Activated CD4-positive, alpha-beta memory T cell treated with anti-CD3 and anti-CD28 coated beads for 36 hours (primary cell): ENCODE measurements at regions of chr15 and their contacts with region 1.

Region 1: DNA sequence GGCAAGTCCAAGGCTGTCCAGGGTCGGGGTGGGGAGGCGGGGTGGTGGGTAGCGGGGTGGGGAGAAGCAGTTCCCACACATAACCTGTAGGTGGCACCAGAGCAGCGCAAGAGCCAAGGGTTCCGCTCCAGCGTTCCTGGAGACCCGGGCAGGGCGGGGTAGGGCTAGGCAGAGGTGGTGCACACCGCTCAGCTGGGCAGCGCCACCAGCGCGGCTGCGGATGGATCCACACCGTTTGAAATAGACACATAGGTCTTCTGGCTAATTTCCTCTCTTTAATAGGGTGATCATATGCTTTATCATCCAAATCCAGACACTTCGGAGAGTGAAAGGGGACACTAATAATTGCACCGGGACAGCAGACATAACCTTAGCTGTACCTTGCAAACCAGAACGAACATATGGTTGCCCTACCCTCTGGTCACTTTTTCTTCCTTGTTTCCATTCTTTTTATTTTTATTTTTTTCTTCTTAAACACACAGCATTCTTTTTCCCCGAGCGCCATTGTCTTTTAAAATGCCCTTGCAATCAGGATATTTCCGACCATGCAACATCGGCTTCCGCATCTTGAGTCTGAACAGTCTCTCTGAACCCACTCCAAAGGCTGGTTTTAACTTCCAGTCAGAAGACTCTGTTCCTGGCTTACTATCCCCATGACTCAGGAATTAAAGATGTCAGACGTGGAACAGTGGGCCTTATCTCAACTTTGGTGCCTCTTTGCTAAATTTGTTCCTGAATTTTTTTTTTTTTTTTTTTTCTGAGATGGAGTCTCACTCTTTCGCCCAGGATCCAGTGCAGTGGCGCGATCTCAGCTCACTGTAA is 12.5 kb upstream of the ZSCAN2 start:
- DNase-seq: peak; percentile 91
- H3K4me3 Mint-ChIP-seq: peak overlapping the region; percentile 59
- H3K27ac Mint-ChIP-seq: no peak overlapping the region
- H3K4me1 Mint-ChIP-seq: peaks cover 2% of the 10 kb centered on the region
- H3K27me3 Mint-ChIP-seq: no peaks in the 10 kb centered on the region

Region 2: DNA sequence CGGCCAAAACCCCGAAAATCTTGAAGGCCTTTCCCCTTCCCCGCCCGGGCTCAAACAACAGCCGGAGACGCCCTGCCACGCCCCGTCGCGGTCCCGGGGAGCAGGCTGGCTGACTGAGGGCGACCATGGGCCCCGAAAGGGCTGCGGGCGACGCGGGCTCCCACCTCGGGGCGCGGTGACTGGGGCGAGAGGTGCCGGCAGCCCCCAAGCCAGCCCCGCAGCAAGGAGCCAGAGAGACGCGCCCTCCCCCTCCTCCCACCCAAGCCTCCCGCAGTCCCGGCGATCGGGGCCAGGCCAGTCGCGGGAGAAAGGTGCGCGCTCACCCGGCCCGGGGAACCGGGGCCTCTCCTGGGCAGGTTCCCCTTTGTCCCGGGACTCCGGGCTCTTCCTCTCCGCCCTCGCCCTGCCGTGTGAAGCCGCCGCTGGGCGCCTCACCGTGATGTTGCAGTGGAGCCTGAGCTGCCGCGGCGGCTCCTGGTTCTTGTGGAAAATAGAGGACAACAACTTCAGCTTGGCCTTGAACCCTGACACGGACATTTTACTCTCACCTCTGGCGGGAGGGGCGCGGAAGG is 18.0 kb before region 1 on chr15:
- CTCF ChIA-PET with region 1: interaction called, 65 read pairs
- POLR2A ChIA-PET with region 1: no interaction called
- intact Hi-C with region 1: no loop called
- DNase-seq: peak; percentile 67
- H3K4me3 Mint-ChIP-seq: peak overlapping the region; percentile 84
- H3K27ac Mint-ChIP-seq: peak overlapping the region; percentile 60
- H3K4me1 Mint-ChIP-seq: peaks cover 14% of the 10 kb centered on the region
- H3K27me3 Mint-ChIP-seq: no peaks in the 10 kb centered on the region

Region 3: DNA sequence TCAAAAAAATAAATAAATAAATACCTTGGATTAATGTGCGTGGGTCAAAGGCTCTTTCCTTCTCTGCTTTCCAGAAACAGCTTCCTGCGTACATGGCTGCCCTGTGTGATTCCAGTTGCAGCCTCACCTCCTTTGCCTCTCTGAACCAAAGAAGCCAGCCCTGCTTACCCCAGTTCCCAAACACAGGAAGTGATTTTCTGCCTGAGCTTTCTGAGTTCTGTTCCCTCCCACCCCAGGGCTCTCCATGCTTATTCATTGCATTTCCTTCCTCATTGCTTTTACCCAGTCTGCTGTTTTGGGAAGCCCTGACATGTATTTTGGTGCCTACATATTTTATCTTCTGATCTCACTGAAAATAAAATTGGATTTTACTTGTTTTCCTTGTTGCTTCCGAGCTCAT is 28.0 kb after region 1 on chr15:
- CTCF ChIA-PET with region 1: no interaction called
- POLR2A ChIA-PET with region 1: no interaction called
- intact Hi-C with region 1: no loop called
- DNase-seq: no peak
- H3K4me3 Mint-ChIP-seq: no peak overlapping the region
- H3K27ac Mint-ChIP-seq: no peak overlapping the region
- H3K4me1 Mint-ChIP-seq: no peaks in the 10 kb centered on the region
- H3K27me3 Mint-ChIP-seq: no peaks in the 10 kb centered on the region

Region 4: GRCh38 chr15:84633311-84634227 is 45.3 kb after region 1 on chr15:
- CTCF ChIA-PET with region 1: interaction called, 11 read pairs
- POLR2A ChIA-PET with region 1: no interaction called
- intact Hi-C with region 1: loop called (anchors 1 kb)
- DNase-seq: peak; percentile 73
- H3K4me3 Mint-ChIP-seq: peak overlapping the region; percentile 98
- H3K27ac Mint-ChIP-seq: peak overlapping the region; percentile 96
- H3K4me1 Mint-ChIP-seq: peaks cover 47% of the 10 kb centered on the region
- H3K27me3 Mint-ChIP-seq: no peaks in the 10 kb centered on the region

Region 5: DNA sequence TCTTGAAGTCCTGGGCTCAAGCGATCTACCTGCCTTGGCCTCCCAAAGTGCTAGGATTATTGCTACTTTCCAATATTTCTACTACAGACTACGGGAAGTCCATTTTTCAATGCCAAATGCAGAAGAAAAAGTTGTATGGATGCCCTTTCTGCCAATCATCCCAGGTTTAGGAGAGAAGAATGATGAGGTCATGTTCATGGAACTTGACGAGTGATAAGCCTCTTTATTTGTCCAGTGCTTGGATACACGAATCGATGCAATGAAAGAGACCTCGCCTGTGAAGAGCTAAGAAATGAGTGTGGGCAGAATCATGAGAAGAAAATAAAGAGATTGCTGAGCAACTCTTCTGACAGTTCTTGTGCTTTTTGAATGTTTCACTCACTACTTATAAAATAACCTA is 295.2 kb after region 1 on chr15:
- CTCF ChIA-PET with region 1: interaction called, 26 read pairs
- POLR2A ChIA-PET with region 1: no interaction called
- intact Hi-C with region 1: loop called (anchors 1 kb)
- DNase-seq: no peak
- H3K4me3 Mint-ChIP-seq: no peak overlapping the region
- H3K27ac Mint-ChIP-seq: no peak overlapping the region
- H3K4me1 Mint-ChIP-seq: no peaks in the 10 kb centered on the region
- H3K27me3 Mint-ChIP-seq: no peaks in the 10 kb centered on the region

Region 6: DNA sequence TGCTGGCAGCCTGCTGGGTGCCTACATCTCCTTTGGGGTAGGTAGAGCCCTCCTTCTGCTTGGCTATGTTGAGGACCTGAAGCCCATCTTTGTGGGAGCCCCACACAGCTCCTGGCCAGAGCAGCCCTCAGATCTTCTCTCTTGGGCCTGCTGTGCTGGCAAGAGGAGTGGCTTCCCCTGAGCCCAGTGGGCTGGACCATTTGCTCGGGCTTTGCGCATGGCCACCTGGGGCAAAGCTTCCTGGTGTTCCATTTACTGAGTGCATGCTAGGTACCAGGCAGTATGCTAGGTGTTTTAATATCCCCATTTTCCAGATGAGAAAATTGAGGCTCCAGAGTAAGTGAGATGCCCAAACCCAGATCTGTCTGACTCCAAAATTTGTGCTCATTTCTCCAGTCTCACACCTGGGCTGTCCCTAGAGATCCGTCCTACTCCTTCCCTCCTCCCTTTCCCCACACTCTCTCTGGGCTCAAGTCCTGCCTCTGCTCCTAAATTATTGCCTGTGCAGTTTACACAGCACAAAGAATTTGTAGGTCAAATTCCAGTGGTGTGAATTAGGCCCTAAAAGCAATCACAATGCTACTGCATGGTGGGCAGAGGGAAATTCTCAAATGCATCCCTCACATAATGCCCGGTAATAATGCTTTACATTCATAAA is 335.9 kb after region 1 on chr15:
- CTCF ChIA-PET with region 1: interaction called, 34 read pairs
- POLR2A ChIA-PET with region 1: interaction called, 5 read pairs
- intact Hi-C with region 1: loop called (anchors 1 kb)
- DNase-seq: no peak
- H3K4me3 Mint-ChIP-seq: no peak overlapping the region
- H3K27ac Mint-ChIP-seq: no peak overlapping the region
- H3K4me1 Mint-ChIP-seq: peaks cover 5% of the 10 kb centered on the region
- H3K27me3 Mint-ChIP-seq: peaks cover 2% of the 10 kb centered on the region

Region 7: DNA sequence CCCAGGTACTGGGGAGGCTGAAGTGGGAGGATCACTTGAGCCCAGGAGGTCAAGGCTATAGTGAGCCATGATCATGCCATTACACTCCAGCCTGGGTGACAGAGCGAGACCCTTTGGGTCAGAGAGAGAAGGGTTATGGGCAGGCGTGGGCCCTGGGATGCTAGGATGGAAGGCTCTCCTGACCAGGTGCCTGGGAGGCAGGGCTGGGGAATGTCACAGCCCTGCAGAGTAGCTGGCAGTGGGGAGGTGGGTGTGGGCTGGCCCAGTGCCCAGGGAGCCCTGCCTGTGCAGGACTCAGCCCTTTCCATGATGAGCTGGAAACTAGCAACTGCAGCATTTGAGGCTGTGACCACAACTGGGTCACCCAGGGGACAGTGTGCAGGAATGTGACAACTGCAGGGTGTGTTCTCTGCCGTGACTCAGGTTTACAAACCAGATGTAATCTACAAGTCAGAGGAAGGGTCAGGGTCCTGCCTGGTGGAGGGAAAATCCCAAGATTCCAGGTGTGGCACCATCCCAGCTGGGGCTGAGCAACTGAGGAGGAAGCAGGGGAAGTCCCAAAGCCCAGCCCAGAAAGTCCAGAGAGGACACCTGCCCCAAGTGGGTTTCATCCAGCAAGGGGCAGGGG is 341.6 kb after region 1 on chr15:
- CTCF ChIA-PET with region 1: interaction called, 34 read pairs
- POLR2A ChIA-PET with region 1: interaction called, 5 read pairs
- intact Hi-C with region 1: loop called (anchors 1 kb)
- DNase-seq: peak; percentile 46
- H3K4me3 Mint-ChIP-seq: no peak overlapping the region
- H3K27ac Mint-ChIP-seq: peak overlapping the region; percentile 44
- H3K4me1 Mint-ChIP-seq: peaks cover 8% of the 10 kb centered on the region
- H3K27me3 Mint-ChIP-seq: peaks cover 2% of the 10 kb centered on the region